ENCODE measurements at regions of chr2 and their contacts with region 1.

Region 1: GRCh38 chr2:190718652-190719526 is 70.0 kb downstream of the NAB1 start:
- DNase-seq: peak; percentile 93
- H3K4me3 Mint-ChIP-seq: peak overlapping the region; percentile 0
- H3K27ac Mint-ChIP-seq: peak overlapping the region; percentile 60
- H3K4me1 Mint-ChIP-seq: peaks cover 65% of the 10 kb centered on the region
- H3K27me3 Mint-ChIP-seq: no peaks in the 10 kb centered on the region

Region 2: GRCh38 chr2:190511104-190511503 is 207.8 kb before region 1 on chr2:
- CTCF ChIA-PET with region 1: no interaction called
- intact Hi-C with region 1: loop called (anchors 5 kb)
- DNase-seq: no peak
- H3K4me3 Mint-ChIP-seq: no peak overlapping the region
- H3K27ac Mint-ChIP-seq: no peak overlapping the region
- H3K4me1 Mint-ChIP-seq: peaks cover 26% of the 10 kb centered on the region
- H3K27me3 Mint-ChIP-seq: no peaks in the 10 kb centered on the region

Region 3: GRCh38 chr2:190695739-190696138 is 23.1 kb before region 1 on chr2:
- CTCF ChIA-PET with region 1: interaction called, 5 read pairs
- intact Hi-C with region 1: loop called (anchors 1 kb)
- DNase-seq: peak; percentile 55
- H3K4me3 Mint-ChIP-seq: no peak overlapping the region
- H3K27ac Mint-ChIP-seq: no peak overlapping the region
- H3K4me1 Mint-ChIP-seq: peaks cover 23% of the 10 kb centered on the region
- H3K27me3 Mint-ChIP-seq: no peaks in the 10 kb centered on the region

Region 4: GRCh38 chr2:190843874-190844699 is 125.2 kb after region 1 on chr2:
- CTCF ChIA-PET with region 1: no interaction called
- intact Hi-C with region 1: loop called (anchors 1 kb)
- DNase-seq: peak; percentile 76
- H3K4me3 Mint-ChIP-seq: peak overlapping the region; percentile 22
- H3K27ac Mint-ChIP-seq: peak overlapping the region; percentile 85
- H3K4me1 Mint-ChIP-seq: peaks cover 48% of the 10 kb centered on the region
- H3K27me3 Mint-ChIP-seq: no peaks in the 10 kb centered on the region

Region 5: DNA sequence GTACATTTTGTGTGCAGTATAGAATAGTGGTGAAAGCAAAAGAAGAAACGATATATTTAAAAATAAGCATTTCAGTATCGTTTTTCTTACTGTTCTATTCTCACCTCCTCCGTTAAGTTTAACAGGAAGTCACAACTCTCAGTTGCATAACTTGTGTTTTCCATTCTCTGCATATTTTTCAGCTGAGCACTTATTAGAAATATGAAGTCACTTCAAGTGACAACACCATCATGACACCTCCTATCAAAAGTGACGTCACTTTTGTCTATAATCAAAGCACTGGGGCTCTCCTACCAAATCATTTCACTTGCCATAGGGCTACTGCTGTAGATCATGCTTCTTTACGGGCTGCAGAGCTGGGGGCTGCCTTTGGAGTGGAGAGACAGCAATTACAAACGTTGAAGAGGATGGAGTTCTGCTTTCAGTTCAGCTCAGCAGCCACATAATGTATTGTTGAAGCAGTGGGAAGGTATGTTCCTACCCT is 395.6 kb after region 1 on chr2:
- CTCF ChIA-PET with region 1: interaction called, 3 read pairs
- intact Hi-C with region 1: loop called (anchors 1 kb)
- DNase-seq: peak; percentile 74
- H3K4me3 Mint-ChIP-seq: peak overlapping the region; percentile 57
- H3K27ac Mint-ChIP-seq: peak overlapping the region; percentile 87
- H3K4me1 Mint-ChIP-seq: peaks cover 78% of the 10 kb centered on the region
- H3K27me3 Mint-ChIP-seq: no peaks in the 10 kb centered on the region